CD8-positive, alpha-beta memory T cell (primary cell): ENCODE measurements at regions of chr12 and their contacts with region 1.

Region 1: GRCh38 chr12:48814262-48815125 is 3.8 kb upstream of the CACNB3 start:
- DNase-seq: peak; percentile 60 to 81 (median 69)
- H3K4me3 ChIP-seq: peak overlapping the region; percentile 84
- H3K4me3 Mint-ChIP-seq: peak overlapping the region; percentile 89 to 98 (median 94)
- H3K27ac ChIP-seq: peak overlapping the region; percentile 67
- H3K27ac Mint-ChIP-seq: peak overlapping the region; percentile 30 to 96 (median 66)
- H3K4me1 ChIP-seq: peaks cover 26% of the 10 kb centered on the region
- H3K4me1 Mint-ChIP-seq: peaks cover 29 to 46% (median 39%) of the 10 kb centered on the region in 3 donors
- H3K27me3 ChIP-seq: no peaks in the 10 kb centered on the region
- H3K27me3 Mint-ChIP-seq: peaks cover 0 to 5% of the 10 kb centered on the region in 2 donors

Region 2: DNA sequence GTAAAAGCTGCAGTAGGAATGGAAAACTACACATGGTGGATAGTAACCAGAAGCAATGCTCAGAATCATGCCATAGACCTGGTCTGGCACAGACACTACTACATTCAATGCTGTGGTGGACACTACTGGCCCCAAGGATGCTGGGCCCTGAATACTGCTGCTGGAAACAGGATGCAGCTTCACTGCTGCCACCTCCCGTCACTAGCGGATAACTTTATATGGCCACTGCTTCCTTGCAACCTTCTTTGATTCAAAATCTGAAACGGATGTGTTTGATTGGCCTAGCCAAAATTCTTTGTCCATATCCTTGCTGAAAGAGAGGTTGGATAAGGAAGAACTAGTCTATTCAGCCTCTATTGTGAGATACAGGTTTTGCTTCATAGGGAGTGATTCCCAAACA is 56.3 kb before region 1 on chr12:
- CTCF ChIA-PET with region 1: interaction called, 10 read pairs
- POLR2A ChIA-PET with region 1: no interaction called
- DNase-seq: no peak
- H3K4me3 ChIP-seq: no peak overlapping the region
- H3K4me3 Mint-ChIP-seq: no peak overlapping the region
- H3K27ac ChIP-seq: no peak overlapping the region
- H3K27ac Mint-ChIP-seq: no peak overlapping the region
- H3K4me1 ChIP-seq: no peaks in the 10 kb centered on the region
- H3K4me1 Mint-ChIP-seq: no peaks in the 10 kb centered on the region
- H3K27me3 ChIP-seq: no peaks in the 10 kb centered on the region
- H3K27me3 Mint-ChIP-seq: no peaks in the 10 kb centered on the region

Region 3: DNA sequence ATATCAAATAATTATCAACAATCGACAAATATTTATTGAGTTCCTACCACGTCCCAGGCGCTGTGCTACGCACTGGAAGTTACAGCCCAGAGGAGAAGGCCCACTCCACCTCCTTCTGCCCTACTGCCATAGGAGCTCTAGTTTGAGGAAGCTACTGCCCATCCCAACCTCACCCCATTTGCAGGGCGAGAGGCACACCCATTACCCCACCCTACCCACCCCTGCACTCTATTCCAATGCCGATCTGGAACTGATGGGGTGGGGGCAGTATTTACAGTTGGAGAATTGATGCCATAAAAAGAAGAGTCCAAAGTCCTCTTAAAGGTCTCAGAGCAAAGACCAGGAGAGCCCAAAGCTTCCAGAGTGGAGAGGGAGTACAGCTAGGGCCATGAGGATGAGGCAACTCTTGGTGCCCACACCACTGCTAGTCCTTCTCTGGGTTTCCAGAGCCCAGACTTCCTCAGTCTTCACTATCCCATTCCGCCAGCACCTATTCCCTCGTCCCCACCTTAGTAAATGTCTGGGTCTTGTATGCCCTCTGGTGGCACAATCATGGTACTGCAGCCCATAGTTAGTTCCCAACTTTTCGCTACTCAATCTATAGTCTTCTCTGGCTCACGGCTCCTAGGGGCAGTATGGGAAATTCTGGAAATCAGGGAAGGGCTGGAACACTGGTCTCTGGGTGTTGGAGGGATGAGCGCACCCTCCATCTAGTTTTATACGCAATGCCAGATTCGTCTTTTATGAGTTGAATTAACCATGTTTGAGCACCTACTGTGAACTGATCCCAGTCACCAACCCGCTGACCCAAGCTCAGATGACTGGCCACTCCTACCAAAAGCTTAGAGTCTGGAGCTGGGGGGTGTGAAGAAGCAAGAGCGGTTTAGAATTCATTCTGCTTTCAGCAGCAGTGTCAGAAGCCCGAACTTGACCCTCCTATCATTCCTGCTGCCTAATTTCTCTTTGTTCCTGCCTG is 18.7 kb before region 1 on chr12:
- CTCF ChIA-PET with region 1: interaction called, 33 read pairs
- POLR2A ChIA-PET with region 1: no interaction called
- DNase-seq: peak; percentile 32 to 67 (median 49)
- H3K4me3 ChIP-seq: no peak overlapping the region
- H3K4me3 Mint-ChIP-seq: no peak overlapping the region
- H3K27ac ChIP-seq: no peak overlapping the region
- H3K27ac Mint-ChIP-seq: peak overlapping the region in 1 of 8 donors; percentile 41
- H3K4me1 ChIP-seq: no peaks in the 10 kb centered on the region
- H3K4me1 Mint-ChIP-seq: peaks cover 0 to 5% (median 3%) of the 10 kb centered on the region in 3 donors
- H3K27me3 ChIP-seq: no peaks in the 10 kb centered on the region
- H3K27me3 Mint-ChIP-seq: peaks cover 9 to 17% of the 10 kb centered on the region in 2 donors

Region 4: DNA sequence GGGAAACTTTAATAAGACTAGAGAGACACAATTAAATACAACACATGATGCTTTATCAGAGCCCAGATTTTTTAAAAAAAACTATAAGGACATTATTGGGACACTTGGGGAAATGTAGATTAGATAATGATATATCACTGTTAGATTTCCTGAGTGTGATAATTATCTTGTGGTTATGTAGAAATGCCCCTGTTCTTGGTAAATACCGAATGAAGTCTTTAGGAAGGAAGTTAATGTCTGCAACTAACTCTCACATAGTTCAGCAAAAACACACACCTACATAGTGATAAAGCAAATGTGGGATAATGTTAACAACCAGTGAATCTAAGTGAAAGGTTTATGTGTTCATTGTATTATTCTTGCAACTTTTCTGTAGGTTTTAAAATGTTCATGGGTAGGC is 10.8 kb before region 1 on chr12:
- CTCF ChIA-PET with region 1: interaction called, 10 read pairs
- POLR2A ChIA-PET with region 1: no interaction called
- DNase-seq: no peak
- H3K4me3 ChIP-seq: no peak overlapping the region
- H3K4me3 Mint-ChIP-seq: no peak overlapping the region
- H3K27ac ChIP-seq: no peak overlapping the region
- H3K27ac Mint-ChIP-seq: no peak overlapping the region
- H3K4me1 ChIP-seq: no peaks in the 10 kb centered on the region
- H3K4me1 Mint-ChIP-seq: peaks cover 4 to 7% (median 5%) of the 10 kb centered on the region in 3 donors
- H3K27me3 ChIP-seq: no peaks in the 10 kb centered on the region
- H3K27me3 Mint-ChIP-seq: peaks cover 0 to 3% of the 10 kb centered on the region in 2 donors

Region 5: DNA sequence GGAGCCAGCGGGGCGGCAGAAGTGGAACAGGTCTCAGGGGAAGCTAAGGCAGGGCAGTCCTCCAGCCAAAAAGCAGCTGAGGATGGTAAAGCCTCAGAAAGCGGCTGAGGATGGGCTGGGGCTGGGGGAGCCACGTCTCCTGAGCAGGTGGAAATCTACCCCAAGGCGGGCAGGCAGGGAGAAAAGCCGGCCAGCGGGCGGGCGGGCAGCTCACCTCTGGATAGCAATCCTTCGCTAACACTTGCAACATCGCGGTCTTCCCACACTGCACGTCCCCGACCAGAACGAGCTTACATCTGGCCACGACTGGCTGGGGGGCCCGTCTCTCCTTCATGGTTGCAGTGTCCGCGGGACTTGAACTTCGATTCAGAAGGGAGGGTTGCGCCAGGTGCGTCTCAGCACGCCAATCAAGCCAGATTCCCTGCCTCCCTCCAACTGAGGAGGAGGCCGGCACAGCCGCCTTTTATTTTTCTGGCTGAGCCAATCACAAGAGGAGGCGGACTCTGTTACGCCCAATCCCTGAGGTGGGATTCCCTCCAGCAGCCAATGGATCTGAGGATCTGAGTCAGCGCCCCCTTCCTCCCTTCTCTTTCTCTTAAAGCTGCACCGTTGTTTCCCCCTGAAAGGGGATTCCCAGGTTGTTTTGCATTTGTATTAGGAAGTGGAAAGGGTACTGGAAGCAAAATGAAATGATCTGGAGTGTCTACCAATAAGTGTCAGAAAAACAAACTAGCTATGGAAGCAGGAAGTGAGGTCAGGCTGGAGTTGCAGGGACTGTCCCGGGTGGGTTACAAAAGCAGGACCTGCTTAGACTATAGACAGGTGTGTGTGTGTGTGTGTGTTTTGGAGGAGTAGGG is 51.2 kb after region 1 on chr12 and contains the start of gene RND1:
- CTCF ChIA-PET with region 1: interaction called, 15 read pairs
- POLR2A ChIA-PET with region 1: interaction called, 4 read pairs
- DNase-seq: peak; percentile 75 to 90 (median 86)
- H3K4me3 ChIP-seq: peak within 1 kb of the TSS; percentile 84
- H3K4me3 Mint-ChIP-seq: peak within 1 kb of the TSS; percentile 90 to 96 (median 93)
- H3K27ac ChIP-seq: peak within 1 kb of the TSS; percentile 39
- H3K27ac Mint-ChIP-seq: peak within 1 kb of the TSS; percentile 55 to 96 (median 88)
- H3K4me1 ChIP-seq: peaks cover 22% of the 10 kb centered on the region
- H3K4me1 Mint-ChIP-seq: peaks cover 21 to 27% (median 24%) of the 10 kb centered on the region in 3 donors
- H3K27me3 ChIP-seq: peaks cover 22% of the 10 kb centered on the region
- H3K27me3 Mint-ChIP-seq: peaks cover 26 to 30% of the 10 kb centered on the region in 2 donors
- total RNA-seq, gene RND1: 2.0 to 2.6 TPM

Region 6: DNA sequence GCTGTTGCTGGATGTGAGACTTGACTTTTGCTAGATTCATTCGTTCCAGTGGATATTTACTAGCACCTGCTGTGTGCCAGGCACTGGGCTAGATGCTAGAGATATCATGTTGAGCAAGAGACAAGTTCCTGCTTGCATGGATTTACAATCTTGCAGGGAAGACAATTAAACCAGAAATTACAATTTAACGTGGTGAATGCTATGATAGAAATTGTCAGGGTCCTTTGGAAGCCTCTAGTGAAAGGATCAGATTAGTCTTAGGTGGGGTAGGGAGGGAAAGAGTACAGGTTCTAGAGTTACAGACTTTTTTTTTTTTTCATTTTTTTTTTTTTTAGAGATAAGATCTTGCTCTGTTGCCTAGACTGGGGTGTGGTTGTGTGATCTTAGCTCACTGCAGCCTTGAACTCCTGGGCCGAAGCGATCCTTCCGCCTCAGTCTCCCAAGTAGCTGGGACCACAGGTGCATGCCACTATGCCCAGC is 589.5 kb after region 1 on chr12:
- CTCF ChIA-PET with region 1: no interaction called
- POLR2A ChIA-PET with region 1: no interaction called
- DNase-seq: no peak
- H3K4me3 ChIP-seq: no peak overlapping the region
- H3K4me3 Mint-ChIP-seq: no peak overlapping the region
- H3K27ac ChIP-seq: no peak overlapping the region
- H3K27ac Mint-ChIP-seq: peak overlapping the region in 3 of 8 donors; percentile 12 to 51 (median 15)
- H3K4me1 ChIP-seq: peaks cover 11% of the 10 kb centered on the region
- H3K4me1 Mint-ChIP-seq: peaks cover 8 to 11% (median 9%) of the 10 kb centered on the region in 3 donors
- H3K27me3 ChIP-seq: no peaks in the 10 kb centered on the region
- H3K27me3 Mint-ChIP-seq: no peaks in the 10 kb centered on the region